ENCODE measurements at regions of chr7 and their contacts with region 1.

Region 1: GRCh38 chr7:108425714-108426275 is 30.4 kb downstream of the NRCAM start:
- DNase-seq: no peak

Region 2: GRCh38 chr7:108211382-108212201 is 214.2 kb before region 1 on chr7:
- intact Hi-C with region 1: no loop called
- DNase-seq: no peak

Region 3: DNA sequence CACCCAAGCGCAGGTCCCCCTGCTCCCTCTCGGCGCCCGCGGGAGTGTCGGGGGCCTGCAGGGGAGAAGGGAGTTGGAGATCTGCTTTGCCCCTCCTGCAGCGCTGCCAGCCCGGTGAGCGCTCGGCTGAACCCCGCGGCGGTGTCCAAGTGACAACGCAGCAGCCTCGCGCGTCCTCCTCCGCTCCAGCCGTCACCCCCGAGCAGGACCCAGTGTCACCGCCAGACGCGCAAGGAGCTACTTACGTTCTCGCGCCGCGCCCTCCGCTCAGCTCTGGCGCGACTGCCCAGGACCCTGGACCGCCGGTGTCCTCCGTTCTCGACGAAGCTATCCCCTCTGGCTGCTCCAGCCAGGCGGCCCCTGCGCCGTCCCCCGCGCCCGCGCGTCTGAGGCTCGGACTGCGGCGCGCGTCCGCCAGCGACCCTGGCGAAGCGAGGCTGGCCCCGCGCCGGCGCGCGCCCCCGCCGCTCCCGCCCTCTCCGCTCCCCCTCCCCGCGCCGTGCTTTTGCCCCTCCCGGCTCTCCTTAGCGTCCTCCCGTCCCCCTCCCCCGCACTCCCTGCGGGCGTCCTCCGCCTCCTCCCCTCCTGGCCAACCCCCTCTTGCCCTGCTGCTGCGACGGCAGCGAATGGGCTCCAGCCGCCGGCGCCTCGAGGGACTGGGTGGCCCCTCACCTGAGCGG is 30.3 kb after region 1 on chr7 and contains the start of gene NRCAM:
- intact Hi-C with region 1: loop called in 1 of 2 experiments (anchors 2 kb)
- DNase-seq: no peak
- total RNA-seq, gene NRCAM: 1.5 to 1.7 TPM

Region 4: GRCh38 chr7:108486291-108486966 is 60.6 kb after region 1 on chr7:
- intact Hi-C with region 1: no loop called
- DNase-seq: no peak